Panc1 (cell line): ENCODE measurements at regions of chr15 and their contacts with region 1.

Region 1: GRCh38 chr15:95075792-95076677 is 844.7 kb downstream of the MCTP2 start:
- DNase-seq: no peak
- ATAC-seq: no peak
- H3K4me3 ChIP-seq: no peak overlapping the region
- H3K27ac ChIP-seq: no peak overlapping the region
- H3K4me1 ChIP-seq: no peaks in the 10 kb centered on the region
- H3K27me3 ChIP-seq: no peaks in the 10 kb centered on the region
- CTCF ChIP-seq: no peak

Region 2: GRCh38 chr15:95032156-95032555 is 43.9 kb before region 1 on chr15:
- CTCF ChIA-PET with region 1: no interaction called
- POLR2A ChIA-PET with region 1: no interaction called
- in situ Hi-C with region 1: no loop called
- intact Hi-C with region 1: no loop called
- DNase-seq: no peak
- ATAC-seq: no peak; the same call in 1 of the 2 replicates
- H3K4me3 ChIP-seq: no peak overlapping the region
- H3K27ac ChIP-seq: no peak overlapping the region
- H3K4me1 ChIP-seq: no peaks in the 10 kb centered on the region
- H3K27me3 ChIP-seq: no peaks in the 10 kb centered on the region
- CTCF ChIP-seq: no peak

Region 3: DNA sequence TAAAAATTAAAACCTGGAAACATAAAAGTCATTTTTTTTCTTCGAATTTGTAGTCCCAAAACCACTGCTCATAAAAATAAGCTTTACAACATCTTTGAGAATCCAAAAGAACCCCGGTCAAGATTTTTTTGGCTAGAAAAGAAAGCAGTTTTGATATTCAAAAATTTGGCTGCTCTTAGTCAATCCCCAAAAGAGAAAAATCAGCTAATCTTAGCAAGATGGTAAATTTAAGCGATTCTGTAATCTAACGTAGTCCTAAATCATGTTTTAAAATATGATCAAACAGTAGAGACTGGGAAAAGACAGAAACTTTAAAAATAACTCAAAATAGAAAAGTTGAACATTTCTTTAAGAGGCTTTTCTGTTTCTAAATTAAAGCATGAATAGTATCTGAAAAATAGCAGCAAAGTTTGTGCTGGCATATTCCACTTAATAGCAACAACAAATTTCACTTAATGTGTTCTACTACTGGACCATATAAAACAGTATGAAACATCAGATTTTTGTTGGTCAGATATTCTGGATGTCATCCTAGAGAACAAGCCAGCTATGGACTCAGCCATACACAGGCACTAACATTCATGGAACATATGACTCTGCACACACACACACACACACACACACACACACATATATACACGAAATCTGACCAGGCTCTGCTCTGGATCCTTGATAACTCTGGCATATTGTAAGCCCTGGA is 1235.4 kb after region 1 on chr15:
- CTCF ChIA-PET with region 1: no interaction called
- POLR2A ChIA-PET with region 1: interaction called, 12 read pairs
- in situ Hi-C with region 1: no loop called
- intact Hi-C with region 1: no loop called
- DNase-seq: no peak
- ATAC-seq: no peak
- H3K4me3 ChIP-seq: no peak overlapping the region
- H3K27ac ChIP-seq: no peak overlapping the region
- H3K4me1 ChIP-seq: no peaks in the 10 kb centered on the region
- H3K27me3 ChIP-seq: no peaks in the 10 kb centered on the region
- CTCF ChIP-seq: no peak